ENCODE measurements at regions of chr1 and their contacts with region 1.

Region 1: DNA sequence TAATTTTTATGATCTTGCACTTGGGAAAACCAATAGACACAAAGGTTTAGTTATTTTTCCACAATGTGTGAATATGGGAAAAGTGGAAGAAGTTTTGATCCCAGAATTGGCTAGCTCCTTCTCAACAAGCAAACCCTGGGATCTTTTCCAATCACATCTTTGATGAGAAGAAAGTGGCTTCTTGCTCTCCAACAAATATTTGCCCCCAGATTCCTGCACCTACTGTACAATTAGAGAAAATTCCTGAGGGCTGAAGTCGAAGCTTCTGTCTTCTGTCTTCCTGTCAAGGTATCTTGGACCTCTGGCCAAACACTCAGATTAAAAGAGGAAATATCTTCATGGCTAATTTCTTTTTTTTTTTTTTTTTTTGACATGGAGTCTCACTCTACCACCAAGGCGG is 113.1 kb upstream of the SLC45A1 start:
- DNase-seq: no peak
- ATAC-seq: no peak
- H3K4me3 ChIP-seq: no peak overlapping the region
- H3K27ac ChIP-seq: peak overlapping the region; percentile 99
- H3K4me1 ChIP-seq: peaks cover 46% of the 10 kb centered on the region
- H3K27me3 ChIP-seq: no peaks in the 10 kb centered on the region
- CTCF ChIP-seq: no peak

Region 2: GRCh38 chr1:8182034-8182761 is 22.6 kb before region 1 on chr1:
- CTCF ChIA-PET with region 1: no interaction called
- POLR2A ChIA-PET with region 1: no interaction called
- in situ Hi-C with region 1: no loop called
- intact Hi-C with region 1: no loop called
- DNase-seq: peak; percentile 99
- ATAC-seq: peak; percentile 96
- H3K4me3 ChIP-seq: no peak overlapping the region
- H3K27ac ChIP-seq: peak overlapping the region; percentile 100
- H3K4me1 ChIP-seq: peaks cover 19% of the 10 kb centered on the region
- H3K27me3 ChIP-seq: no peaks in the 10 kb centered on the region
- CTCF ChIP-seq: no peak

Region 3: GRCh38 chr1:8217011-8217711 is 12.3 kb after region 1 on chr1:
- CTCF ChIA-PET with region 1: no interaction called
- POLR2A ChIA-PET with region 1: interaction called, 10 read pairs
- in situ Hi-C with region 1: no loop called
- intact Hi-C with region 1: no loop called
- DNase-seq: no peak
- ATAC-seq: no peak
- H3K4me3 ChIP-seq: no peak overlapping the region
- H3K27ac ChIP-seq: peak overlapping the region; percentile 55; the same call in 1 of the 2 replicates
- H3K4me1 ChIP-seq: peaks cover 26% of the 10 kb centered on the region
- H3K27me3 ChIP-seq: no peaks in the 10 kb centered on the region
- CTCF ChIP-seq: no peak

Region 4: DNA sequence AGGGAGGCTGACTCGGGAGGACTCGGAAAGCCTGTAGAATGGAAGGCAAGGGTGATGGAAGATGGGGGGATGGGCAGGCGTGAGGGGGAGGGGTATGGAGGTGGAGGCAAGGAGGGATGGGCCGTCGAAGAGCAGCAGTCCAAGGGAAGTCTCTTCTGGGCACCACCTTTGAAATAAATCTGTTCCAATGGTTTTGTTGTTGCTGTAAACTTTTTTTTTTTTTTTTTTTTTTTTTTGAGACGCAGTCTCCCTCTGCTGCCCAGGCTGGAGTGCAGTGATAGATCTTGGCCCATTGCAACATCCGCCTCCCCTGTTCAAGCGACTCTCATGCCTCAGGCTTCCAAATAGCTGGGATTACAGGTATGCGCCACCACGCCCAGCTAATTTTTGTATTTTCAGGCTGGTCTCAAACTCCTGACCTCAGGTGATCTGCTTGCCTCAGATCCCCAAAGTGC is 34.1 kb after region 1 on chr1:
- CTCF ChIA-PET with region 1: interaction called, 15 read pairs
- POLR2A ChIA-PET with region 1: no interaction called
- in situ Hi-C with region 1: no loop called
- intact Hi-C with region 1: no loop called
- DNase-seq: peak; percentile 48
- ATAC-seq: peak; percentile 80
- H3K4me3 ChIP-seq: no peak overlapping the region
- H3K27ac ChIP-seq: peak overlapping the region; percentile 86
- H3K4me1 ChIP-seq: peaks cover 24% of the 10 kb centered on the region
- H3K27me3 ChIP-seq: no peaks in the 10 kb centered on the region
- CTCF ChIP-seq: no peak

Region 5: GRCh38 chr1:8702850-8703810 is 498.3 kb after region 1 on chr1:
- CTCF ChIA-PET with region 1: no interaction called
- POLR2A ChIA-PET with region 1: no interaction called
- in situ Hi-C with region 1: no loop called
- intact Hi-C with region 1: no loop called
- DNase-seq: peak; percentile 82
- ATAC-seq: peak; percentile 95
- H3K4me3 ChIP-seq: peak overlapping the region; percentile 63 to 78
- H3K27ac ChIP-seq: peak overlapping the region; percentile 93
- H3K4me1 ChIP-seq: peaks cover 66% of the 10 kb centered on the region
- H3K27me3 ChIP-seq: no peaks in the 10 kb centered on the region
- CTCF ChIP-seq: peak; percentile 54

Measured in Panc1 (cell line).